Psoas muscle (tissue), 8 donors: ENCODE measurements at regions of chr10 and their contacts with region 1.

Region 1: DNA sequence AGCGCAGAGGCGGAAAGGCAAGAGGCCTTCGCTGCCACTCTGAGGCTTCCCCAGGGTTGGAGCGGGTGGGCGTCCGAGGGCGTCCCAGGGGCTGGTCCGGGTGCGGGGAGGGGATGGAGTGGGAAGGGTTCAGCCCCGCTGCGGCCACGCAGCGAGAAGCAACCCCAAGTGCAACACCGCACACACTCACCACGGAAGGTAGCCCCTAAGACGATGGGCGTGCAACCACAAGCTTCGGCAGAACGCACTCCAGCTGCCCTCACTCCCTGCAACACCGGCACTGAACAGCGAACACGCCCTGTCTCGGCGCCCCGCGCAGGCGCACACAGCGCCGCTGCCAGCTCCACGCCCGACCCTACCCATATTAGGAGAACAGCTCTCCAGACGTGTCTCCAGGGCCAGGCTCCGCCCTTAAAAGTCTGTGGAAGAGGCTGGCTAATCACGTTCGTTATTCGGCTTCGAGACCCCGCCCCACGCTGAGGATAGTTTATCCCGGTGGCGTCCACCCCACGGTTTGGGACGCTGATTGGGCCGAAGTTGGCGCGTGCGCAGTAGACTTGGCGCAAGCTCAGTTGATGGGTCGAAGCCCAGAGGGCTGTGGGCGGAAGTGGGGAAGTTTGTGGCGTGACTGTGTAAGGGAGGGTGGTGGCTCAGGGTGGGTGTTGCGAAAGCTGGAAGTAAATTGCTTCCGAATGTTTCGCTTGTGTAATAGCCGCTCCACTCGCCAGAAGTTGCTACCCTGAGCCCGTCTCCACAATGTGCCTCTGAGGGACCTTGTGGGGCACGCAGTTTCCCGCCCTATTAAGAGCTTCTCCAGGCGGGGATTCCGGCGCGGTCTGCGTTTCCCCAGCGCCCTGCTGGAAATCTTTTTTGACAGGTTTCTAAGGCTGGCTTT is at the start of gene RSU1:
- DNase-seq: peak; percentile 100
- ATAC-seq: peak; percentile 96 to 98 (median 98)
- H3K4me3 ChIP-seq: peak within 1 kb of the TSS; percentile 74
- H3K27ac ChIP-seq: peak within 1 kb of the TSS; percentile 84
- H3K4me1 ChIP-seq: peaks cover 14% of the 10 kb centered on the region
- H3K27me3 ChIP-seq: no peaks in the 10 kb centered on the region
- CTCF ChIP-seq: no peak
- total RNA-seq, gene RSU1: 19.7 to 41.6 (median 25.8) TPM

Region 2: GRCh38 chr10:16436758-16437539 is 380.4 kb before region 1 on chr10 and contains the start of gene PTER:
- intact Hi-C with region 1: loop called (anchors 5 to 10 kb)
- DNase-seq: peak; percentile 97 to 99
- ATAC-seq: peak; percentile 98 to 99 (median 98)
- H3K4me3 ChIP-seq: peak within 1 kb of the TSS; percentile 92
- H3K27ac ChIP-seq: peak within 1 kb of the TSS; percentile 93
- H3K4me1 ChIP-seq: peaks cover 41% of the 10 kb centered on the region
- H3K27me3 ChIP-seq: no peaks in the 10 kb centered on the region
- CTCF ChIP-seq: no peak
- total RNA-seq, gene PTER: 6.7 to 10.3 (median 6.8) TPM

Region 3: GRCh38 chr10:18659120-18659818 is 1841.9 kb after region 1 on chr10 and contains the start of gene ARL5B:
- intact Hi-C with region 1: loop called in 1 of 2 experiments (anchors 10 kb)
- DNase-seq: peak; percentile 98
- ATAC-seq: peak; percentile 99 to 100 (median 100)
- H3K4me3 ChIP-seq: peak within 1 kb of the TSS; percentile 80
- H3K27ac ChIP-seq: peak within 1 kb of the TSS; percentile 95
- H3K4me1 ChIP-seq: peaks cover 26% of the 10 kb centered on the region
- H3K27me3 ChIP-seq: no peaks in the 10 kb centered on the region
- CTCF ChIP-seq: no peak
- total RNA-seq, gene ARL5B: 4.3 to 7.8 (median 7.0) TPM